ENCODE measurements at regions of chr9 and their contacts with region 1.

Region 1: DNA sequence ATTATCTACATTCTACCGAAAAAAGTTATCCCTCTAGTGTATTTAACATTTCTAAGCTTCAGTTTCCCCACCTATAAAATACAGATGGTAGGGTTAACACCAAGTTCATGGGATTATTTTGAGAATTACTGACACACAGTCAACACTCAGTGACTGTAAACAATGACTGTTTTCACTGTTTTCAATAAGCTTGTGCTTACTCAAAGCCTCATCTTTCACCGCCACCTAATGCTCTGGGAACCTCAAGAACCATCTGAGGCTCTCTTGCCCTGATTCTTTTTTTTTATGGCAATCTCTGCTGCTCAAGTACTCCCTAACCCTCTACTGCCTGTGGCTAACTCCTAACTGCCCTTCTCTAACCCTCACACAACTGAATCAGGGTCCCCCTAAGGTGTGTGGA is 59.6 kb downstream of the SETX start:
- DNase-seq: no peak
- H3K4me3 ChIP-seq: no peak overlapping the region
- H3K27ac ChIP-seq: no peak overlapping the region
- H3K4me1 ChIP-seq: peaks cover 6% of the 10 kb centered on the region
- H3K27me3 ChIP-seq: no peaks in the 10 kb centered on the region
- CTCF ChIP-seq: no peak
- POLR2A ChIP-seq: no peak

Region 2: DNA sequence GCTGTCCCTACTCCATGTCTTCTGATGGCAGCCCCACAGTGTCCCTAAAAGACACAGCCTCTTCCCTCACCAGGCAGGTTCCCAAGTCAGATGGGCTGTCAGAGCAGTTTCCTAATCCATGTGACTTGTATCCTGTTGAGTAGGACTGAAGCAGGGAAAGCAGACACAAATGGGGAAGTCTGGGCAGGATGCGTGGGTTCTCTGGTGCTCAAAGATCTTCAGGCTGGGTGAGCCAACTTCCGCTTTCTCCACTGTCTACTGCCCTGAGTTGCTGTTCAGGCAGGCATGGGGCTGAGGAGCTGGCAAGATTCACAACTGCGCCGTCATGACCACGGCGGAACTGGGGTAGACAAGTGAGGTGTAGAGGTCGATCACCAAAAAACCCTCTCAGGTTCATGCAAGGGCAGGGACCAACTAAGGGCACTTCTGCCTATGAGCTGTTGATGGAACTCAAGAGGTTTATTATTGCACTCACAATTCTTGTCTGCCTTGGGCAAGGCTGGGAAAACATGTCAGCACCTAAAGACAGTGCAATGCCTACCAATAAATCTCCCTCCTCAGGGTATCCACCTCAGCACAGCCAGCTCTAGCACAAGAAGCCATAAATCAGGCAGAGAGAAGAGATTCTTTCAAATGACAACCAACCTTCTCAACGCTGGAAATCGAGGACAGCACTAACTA is 638.7 kb before region 1 on chr9:
- CTCF ChIA-PET with region 1: no interaction called
- POLR2A ChIA-PET with region 1: no interaction called
- dilution Hi-C with region 1: no loop called
- intact Hi-C with region 1: no loop called
- DNase-seq: peak; percentile 98
- H3K4me3 ChIP-seq: no peak overlapping the region
- H3K27ac ChIP-seq: peak overlapping the region; percentile 95
- H3K4me1 ChIP-seq: peaks cover 58% of the 10 kb centered on the region
- H3K27me3 ChIP-seq: no peaks in the 10 kb centered on the region
- CTCF ChIP-seq: no peak
- POLR2A ChIP-seq: no peak

Region 3: DNA sequence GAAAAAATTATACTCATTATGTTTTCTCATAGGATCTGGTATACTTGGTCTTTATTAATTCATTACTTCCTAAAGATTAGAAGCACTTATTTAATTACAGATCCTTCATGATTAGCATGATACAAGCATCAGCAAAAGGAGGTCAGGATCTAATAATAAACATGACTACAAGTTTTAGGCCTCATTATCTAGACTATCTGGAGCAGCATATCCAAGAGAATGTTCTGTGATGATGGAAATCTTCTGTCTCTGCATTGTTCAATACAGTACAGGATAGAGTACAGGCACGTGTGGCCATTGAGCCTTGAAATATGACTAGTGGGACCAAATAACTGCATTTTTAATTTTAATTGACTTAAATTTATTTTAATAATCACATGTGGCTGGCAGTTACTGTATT is 38.4 kb after region 1 on chr9:
- CTCF ChIA-PET with region 1: interaction called, 3 read pairs
- POLR2A ChIA-PET with region 1: no interaction called
- dilution Hi-C with region 1: no loop called
- intact Hi-C with region 1: loop called (anchors 5 kb)
- DNase-seq: no peak
- H3K4me3 ChIP-seq: no peak overlapping the region
- H3K27ac ChIP-seq: no peak overlapping the region
- H3K4me1 ChIP-seq: no peaks in the 10 kb centered on the region
- H3K27me3 ChIP-seq: no peaks in the 10 kb centered on the region
- CTCF ChIP-seq: no peak
- POLR2A ChIP-seq: no peak